ENCODE measurements at regions of chr11 and their contacts with region 1.

Region 1: DNA sequence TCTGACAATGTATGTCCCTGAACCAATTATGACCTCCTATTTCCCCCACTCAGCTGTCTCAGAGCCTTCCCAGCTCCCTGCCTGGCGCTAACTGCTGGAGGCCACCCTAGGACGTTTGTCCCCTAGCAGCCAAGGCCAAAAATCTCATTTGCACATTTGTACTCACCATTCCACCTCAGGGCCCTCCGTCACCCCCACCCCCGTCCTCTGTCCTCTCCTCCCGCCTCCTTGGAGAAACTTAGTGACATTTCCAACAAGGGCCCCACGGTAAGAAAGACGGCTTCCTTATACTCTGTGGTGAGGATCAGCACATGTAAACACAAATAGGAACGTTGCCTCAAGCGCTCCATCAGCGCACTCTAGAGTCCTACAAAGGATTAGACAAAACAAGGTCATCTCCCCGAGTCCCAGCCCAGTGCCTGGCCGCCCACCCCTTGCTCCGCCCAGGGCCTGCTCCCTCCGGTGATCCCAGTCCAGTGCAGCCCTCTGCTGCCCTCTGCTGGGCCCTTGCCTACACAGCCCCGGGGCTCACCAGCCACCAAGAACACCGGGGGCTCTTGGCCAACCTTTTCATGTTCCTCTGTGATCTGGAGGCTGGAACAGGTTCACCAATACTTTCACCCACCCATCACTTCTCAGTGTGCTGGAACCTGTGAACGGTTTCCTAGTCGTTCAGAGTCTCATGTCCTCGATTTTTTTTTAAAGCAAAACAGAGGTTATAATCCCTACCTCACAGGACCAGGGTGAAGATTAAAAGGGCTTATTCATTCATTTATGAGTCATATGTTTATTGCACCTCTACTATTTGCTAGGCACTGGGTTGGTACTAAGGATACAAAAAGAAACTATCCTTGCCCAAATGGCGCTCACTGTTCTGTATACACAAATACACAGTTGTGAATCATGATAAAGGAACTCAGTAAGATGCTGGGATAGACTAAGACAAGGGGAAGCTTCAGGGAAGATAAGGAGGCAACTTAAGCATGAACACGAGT is 15.3 kb upstream of the CTR9 start:
- DNase-seq: peak; percentile 97

Region 2: GRCh38 chr11:10405855-10406592 is 329.8 kb before region 1 on chr11:
- in situ Hi-C with region 1: loop called (anchors 10 kb)
- DNase-seq: peak; percentile 80

Region 3: DNA sequence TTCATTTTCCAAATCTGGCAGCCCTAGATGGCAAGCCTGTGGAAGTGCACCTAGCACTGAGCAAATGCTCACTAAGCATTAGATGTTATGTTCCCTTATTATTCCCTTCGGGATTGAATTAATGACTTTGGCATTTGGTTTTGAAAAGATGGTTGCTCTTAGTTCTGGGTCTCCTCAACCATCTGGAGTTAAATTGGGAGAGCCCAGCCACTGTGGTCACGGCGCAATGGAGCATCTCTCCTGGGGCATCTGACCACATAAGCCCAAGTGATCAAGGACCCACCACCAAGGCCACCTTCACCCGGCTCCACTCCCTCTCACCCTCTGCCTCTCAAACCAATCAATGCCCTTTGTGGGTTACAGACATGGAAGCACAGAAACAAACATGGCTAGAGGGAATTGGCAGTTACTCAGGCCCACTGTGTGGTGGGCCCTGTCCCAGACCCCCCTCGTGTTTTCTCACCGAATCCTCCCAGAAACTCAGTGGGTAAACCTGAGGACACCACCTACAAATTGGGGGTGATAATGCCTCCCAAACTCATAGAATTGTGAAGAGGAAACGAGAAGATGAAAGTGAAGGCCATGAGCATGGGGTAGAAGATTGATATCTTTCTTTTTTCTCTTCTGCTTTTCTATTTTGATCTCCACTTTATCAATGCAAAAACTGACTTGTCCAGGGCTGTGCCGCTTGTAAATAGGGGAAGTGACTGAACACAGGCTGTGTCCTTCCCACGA is 94.4 kb before region 1 on chr11:
- in situ Hi-C with region 1: loop called (anchors 25 kb)
- DNase-seq: peak; percentile 88

Region 4: DNA sequence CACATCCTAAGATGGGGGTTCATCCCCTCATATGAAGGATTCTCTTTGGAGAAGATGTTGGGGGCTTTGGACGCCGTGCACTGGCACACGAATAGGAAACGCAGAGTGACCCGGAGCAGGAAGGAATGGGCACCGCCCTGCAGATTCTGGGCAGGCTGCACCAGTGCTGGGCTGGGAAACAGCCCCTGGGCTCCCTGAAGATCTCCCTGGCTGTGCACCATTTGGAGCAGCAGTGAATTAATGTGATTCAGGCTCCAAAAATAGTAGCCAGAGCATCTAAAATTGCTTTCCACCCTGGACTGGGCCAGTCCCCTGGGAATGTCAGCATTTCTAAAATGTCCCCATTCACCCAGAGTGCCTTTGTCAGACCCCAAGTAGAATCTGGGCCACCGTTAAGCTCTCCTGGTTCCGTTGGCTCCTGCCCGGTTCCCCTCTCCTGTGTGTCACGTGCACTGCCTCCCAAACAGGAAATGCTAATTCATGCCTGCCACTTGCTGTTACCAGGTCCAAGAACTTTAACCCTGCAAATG is 60.8 kb before region 1 on chr11:
- in situ Hi-C with region 1: no loop called
- DNase-seq: no peak